Right ventricle myocardium superior (tissue), 1 donor: ENCODE measurements at regions of chr1 and their contacts with region 1.

Region 1: GRCh38 chr1:68346188-68346808 is 103.5 kb downstream of the RPE65 start:
- DNase-seq: no peak
- ATAC-seq: peak; percentile 35

Region 2: DNA sequence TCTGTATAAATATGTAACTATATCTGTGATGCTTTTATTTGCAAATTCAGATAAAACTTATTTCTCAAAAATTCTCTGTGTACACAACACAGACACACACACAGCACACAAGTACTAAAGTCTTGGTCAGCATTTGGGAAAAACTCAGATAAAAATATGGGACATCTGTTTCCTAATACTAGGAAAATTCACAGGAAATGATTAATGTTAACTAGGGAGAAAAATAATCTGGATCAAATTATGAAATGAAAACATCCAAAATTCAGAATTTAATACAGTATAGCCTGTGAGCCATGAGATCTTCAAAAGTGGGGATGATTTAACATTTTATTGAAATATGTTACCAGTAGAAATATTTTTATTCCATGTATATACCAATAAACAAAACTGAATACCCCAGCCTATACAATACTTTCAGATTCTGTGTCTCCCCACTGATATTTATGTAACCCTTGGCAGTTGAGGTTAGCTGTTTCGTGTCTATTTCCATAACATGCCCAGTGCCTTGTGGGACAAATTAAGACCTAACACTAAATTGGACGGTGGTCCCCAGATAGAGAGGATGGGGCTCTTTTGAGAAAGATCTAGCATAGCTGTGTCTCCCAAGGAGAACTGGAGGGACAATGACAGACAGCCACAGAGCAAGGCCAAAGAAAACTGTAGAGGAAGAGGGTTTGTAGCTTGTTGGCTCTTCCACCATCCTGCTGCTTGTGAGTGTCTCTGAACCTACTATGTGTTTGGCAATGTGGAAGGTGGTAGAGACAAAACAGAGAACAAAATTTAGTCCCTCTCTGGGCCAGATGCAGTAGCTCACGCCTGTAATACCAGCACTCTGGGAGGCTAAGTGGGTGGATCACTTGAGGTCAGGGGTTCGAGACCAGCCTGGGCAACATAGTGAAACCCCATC is 560.2 kb before region 1 on chr1:
- intact Hi-C with region 1: loop called (anchors 10 kb)
- DNase-seq: no peak
- ATAC-seq: peak; percentile 49

Region 3: DNA sequence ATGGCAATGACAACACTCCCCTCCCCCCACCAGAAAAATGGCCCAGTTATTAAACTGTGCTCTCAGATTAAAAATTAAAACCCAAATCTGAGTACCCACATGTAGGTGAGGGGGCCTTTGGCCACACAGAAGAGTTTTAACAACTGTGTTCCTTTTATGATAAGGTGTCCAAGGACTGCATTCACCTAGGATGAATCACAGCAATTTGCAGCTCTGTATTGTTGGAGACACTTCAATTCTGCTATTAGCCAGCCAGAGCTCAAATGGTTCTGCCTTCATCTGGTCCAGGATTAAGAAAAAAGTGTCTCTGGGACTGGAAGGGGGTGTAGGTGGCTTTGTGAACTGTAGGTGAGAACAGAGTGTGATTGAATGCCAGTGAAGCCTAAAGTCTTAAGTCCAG is 252.6 kb before region 1 on chr1:
- intact Hi-C with region 1: no loop called
- DNase-seq: no peak
- ATAC-seq: peak; percentile 64

Region 4: GRCh38 chr1:68506386-68506785 is 160.1 kb after region 1 on chr1:
- intact Hi-C with region 1: no loop called
- DNase-seq: no peak
- ATAC-seq: no peak